Tibial artery (tissue), 4 donors: ENCODE measurements at regions of chr5 and their contacts with region 1.

Region 1: DNA sequence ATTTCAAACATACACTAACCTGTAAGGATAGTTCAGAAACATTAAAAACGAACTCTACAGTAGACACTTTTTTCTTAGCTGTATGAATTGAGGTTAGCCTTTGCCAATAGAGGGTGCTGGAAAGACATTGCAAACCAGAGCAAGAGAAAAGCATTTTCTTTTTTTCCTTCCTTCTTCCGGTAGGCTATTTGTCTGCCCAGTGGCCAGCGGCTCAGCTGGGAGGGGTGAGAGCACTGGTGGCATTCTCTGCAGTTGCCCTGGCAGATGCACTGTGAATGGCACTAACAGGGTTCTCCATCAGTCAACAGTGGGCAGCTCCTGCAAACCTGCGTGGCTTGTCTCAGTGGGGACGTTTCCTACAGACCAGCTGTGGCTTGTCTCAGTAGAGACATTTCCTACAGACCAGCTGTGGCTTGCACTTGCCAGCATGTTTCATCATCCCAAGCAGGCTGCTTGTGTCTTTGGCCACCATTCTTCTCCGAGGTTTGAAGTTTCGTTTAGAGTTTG is 984.5 kb upstream of the CDH18 start:
- DNase-seq: peak in 1 of 2 donors; percentile 64
- H3K4me3 ChIP-seq: peak overlapping the region; percentile 49 to 53
- H3K27ac ChIP-seq: peak overlapping the region in 1 of 2 donors; percentile 53
- H3K4me1 ChIP-seq: peaks cover 0 to 17% (median 0%) of the 10 kb centered on the region in 4 donors
- H3K27me3 ChIP-seq: no peaks in the 10 kb centered on the region
- CTCF ChIP-seq: peak; percentile 29 to 56

Region 2: GRCh38 chr5:20833081-20833627 is 139.3 kb before region 1 on chr5:
- intact Hi-C with region 1: no loop called
- DNase-seq: no peak
- H3K4me3 ChIP-seq: no peak overlapping the region
- H3K27ac ChIP-seq: no peak overlapping the region
- H3K4me1 ChIP-seq: no peaks in the 10 kb centered on the region
- H3K27me3 ChIP-seq: no peaks in the 10 kb centered on the region
- CTCF ChIP-seq: no peak

Region 3: DNA sequence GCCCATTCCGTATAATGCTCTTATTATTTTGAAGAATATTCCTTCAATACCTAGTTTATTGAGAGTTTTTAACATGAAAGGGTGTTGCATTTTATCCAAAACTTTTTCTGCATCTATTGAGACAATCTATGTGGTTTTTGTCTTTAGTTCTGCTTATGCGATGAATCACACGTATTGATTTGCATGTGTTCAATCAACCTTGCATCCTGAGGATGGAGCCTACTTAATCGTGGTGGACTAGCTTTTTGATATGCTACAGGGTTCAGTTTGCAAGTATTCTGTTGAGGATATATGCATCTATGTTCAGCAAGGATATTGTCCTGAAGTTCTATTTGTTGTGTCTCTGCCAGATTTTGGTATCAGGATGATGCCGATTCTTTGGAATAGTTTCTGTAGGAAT is 85.8 kb after region 1 on chr5:
- intact Hi-C with region 1: no loop called
- DNase-seq: no peak
- H3K4me3 ChIP-seq: no peak overlapping the region
- H3K27ac ChIP-seq: no peak overlapping the region
- H3K4me1 ChIP-seq: no peaks in the 10 kb centered on the region
- H3K27me3 ChIP-seq: no peaks in the 10 kb centered on the region
- CTCF ChIP-seq: no peak

Region 4: DNA sequence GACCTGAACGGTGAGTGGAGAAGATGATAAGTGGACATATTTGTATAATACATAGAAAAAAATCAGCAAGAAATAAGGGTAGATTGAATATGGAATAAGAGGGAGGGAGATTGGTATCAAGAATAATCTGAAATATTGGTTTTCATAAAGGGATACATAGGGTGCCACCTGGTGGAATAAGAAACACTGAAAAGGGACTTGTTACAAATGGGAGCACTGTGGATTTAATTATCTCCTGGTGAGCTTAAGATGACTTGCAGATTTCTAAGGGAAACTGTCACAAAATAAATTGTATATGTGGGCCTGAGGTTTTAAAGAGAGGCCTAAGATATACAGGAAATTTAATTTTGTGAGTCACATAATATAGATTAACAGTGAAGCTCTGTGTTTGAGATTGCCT is 419.0 kb after region 1 on chr5:
- intact Hi-C with region 1: loop called (anchors 10 kb)
- DNase-seq: no peak
- H3K4me3 ChIP-seq: no peak overlapping the region
- H3K27ac ChIP-seq: no peak overlapping the region
- H3K4me1 ChIP-seq: no peaks in the 10 kb centered on the region
- H3K27me3 ChIP-seq: no peaks in the 10 kb centered on the region
- CTCF ChIP-seq: peak; percentile 35 to 39